ENCODE measurements at regions of chr15 and their contacts with region 1.

Region 1: DNA sequence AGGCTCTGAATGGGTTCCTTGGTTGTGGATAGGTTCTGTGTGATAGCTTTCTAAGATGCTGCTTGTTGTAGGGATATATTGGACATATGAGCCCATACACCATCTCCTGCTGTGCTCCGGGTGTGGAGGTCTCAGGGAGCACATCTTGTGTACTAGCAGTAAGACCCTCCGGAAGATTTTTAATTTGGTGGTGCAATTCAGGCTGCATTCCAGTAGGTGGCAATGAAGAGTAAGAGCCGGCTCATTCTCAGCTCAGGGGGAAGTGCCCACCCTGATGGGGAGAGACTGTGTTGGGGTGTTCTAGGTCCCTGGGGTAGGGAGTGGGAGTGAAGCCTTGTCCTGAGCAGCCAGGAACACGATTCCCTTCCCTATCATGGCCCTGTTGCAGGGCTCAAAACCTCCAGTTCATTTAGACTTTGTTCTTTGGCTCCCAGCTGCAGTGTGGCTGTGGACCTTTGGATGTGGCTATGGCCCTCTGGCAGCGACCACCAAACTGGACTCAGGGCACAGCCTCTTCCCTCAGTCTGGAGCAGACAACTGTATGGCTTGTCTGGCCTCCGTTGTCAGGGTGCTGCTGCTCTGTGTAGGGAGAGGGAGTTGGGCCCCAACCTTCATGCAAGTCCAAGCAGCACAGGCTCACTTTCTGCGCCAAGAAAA is 104.7 kb downstream of the UNC13C start:
- DNase-seq: peak; percentile 17
- H3K4me3 ChIP-seq: no peak overlapping the region
- H3K27ac ChIP-seq: no peak overlapping the region
- H3K4me1 ChIP-seq: no peaks in the 10 kb centered on the region
- H3K27me3 ChIP-seq: no peaks in the 10 kb centered on the region
- CTCF ChIP-seq: peak; percentile 64 to 74
- POLR2A ChIP-seq: no peak

Region 2: GRCh38 chr15:55108858-55109518 is 1026.0 kb after region 1 on chr15:
- CTCF ChIA-PET with region 1: interaction called, 5 read pairs
- POLR2A ChIA-PET with region 1: no interaction called
- dilution Hi-C with region 1: no loop called
- intact Hi-C with region 1: loop called (anchors 2 kb)
- DNase-seq: peak; percentile 39
- H3K4me3 ChIP-seq: no peak overlapping the region
- H3K27ac ChIP-seq: no peak overlapping the region
- H3K4me1 ChIP-seq: no peaks in the 10 kb centered on the region
- H3K27me3 ChIP-seq: no peaks in the 10 kb centered on the region
- CTCF ChIP-seq: peak; percentile 83 to 85
- POLR2A ChIP-seq: no peak

Region 3: DNA sequence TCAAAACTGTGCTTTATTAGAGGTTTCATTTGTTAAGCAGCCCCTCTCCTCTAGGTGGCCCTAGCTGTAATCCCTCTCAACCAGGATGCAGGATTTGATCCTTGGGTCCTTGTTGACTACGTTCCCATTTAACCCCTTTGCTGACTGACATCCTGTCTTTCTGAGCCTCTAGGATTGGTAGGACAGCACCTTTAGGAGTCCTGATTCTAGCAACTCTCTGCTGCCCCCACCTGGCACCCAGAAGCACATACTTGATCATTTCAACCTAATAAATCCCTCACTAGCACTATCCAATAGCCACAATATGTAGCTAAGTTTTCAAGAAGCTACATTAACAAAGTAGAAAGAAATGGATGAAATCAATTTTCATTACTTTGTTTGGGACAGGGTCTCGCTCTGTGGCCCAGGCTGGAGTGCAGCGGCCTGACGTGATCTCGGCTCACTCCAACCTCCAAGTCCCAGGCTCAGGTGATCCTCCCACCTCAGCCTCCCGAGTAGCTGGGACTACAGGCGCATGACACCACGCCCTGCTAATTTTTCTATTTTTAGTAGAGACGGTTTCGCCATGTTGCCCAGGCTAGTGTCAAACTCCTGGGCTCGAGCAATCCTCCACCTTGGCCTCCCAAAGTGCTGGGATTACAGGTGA is 1085.5 kb after region 1 on chr15:
- CTCF ChIA-PET with region 1: no interaction called
- POLR2A ChIA-PET with region 1: no interaction called
- dilution Hi-C with region 1: no loop called
- intact Hi-C with region 1: loop called (anchors 2 kb)
- DNase-seq: peak; percentile 77
- H3K4me3 ChIP-seq: no peak overlapping the region
- H3K27ac ChIP-seq: no peak overlapping the region
- H3K4me1 ChIP-seq: no peaks in the 10 kb centered on the region
- H3K27me3 ChIP-seq: no peaks in the 10 kb centered on the region
- CTCF ChIP-seq: peak; percentile 74 to 81
- POLR2A ChIP-seq: no peak